Endothelial cell of umbilical vein (primary cell): ENCODE measurements at regions of chr12 and their contacts with region 1.

Region 1: GRCh38 chr12:110431957-110432587 is 18.1 kb downstream of the ARPC3 start:
- DNase-seq: no peak
- H3K4me3 ChIP-seq: no peak overlapping the region
- H3K27ac ChIP-seq: no peak overlapping the region
- H3K4me1 ChIP-seq: peaks cover 12% of the 10 kb centered on the region
- H3K27me3 ChIP-seq: no peaks in the 10 kb centered on the region
- CTCF ChIP-seq: no peak
- POLR2A ChIP-seq: no peak

Region 2: DNA sequence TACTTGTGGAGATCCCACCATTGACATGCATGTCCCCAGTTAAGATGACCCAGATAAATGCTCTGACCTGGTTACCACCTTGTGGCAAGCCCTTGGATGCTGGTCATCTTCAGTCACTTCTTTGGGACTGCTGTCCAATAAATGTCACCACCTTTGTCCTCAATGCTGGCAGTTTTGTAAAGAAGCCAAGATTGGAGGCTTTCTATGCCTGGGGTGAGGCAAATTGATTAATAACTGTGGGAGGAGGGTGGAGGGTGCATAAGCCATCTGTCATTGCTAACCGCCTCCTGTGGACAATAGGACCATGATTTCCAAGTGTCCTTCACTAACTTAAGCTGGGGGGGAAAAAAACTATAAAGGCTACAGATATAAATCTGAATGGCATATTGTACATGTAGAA is 408.5 kb before region 1 on chr12:
- CTCF ChIA-PET with region 1: interaction called, 11 read pairs
- POLR2A ChIA-PET with region 1: interaction called, 6 read pairs
- dilution Hi-C with region 1: no loop called
- intact Hi-C with region 1: no loop called
- DNase-seq: no peak
- H3K4me3 ChIP-seq: no peak overlapping the region
- H3K27ac ChIP-seq: peak overlapping the region; percentile 32
- H3K4me1 ChIP-seq: peaks cover 28% of the 10 kb centered on the region
- H3K27me3 ChIP-seq: no peaks in the 10 kb centered on the region
- CTCF ChIP-seq: no peak
- POLR2A ChIP-seq: no peak

Region 3: DNA sequence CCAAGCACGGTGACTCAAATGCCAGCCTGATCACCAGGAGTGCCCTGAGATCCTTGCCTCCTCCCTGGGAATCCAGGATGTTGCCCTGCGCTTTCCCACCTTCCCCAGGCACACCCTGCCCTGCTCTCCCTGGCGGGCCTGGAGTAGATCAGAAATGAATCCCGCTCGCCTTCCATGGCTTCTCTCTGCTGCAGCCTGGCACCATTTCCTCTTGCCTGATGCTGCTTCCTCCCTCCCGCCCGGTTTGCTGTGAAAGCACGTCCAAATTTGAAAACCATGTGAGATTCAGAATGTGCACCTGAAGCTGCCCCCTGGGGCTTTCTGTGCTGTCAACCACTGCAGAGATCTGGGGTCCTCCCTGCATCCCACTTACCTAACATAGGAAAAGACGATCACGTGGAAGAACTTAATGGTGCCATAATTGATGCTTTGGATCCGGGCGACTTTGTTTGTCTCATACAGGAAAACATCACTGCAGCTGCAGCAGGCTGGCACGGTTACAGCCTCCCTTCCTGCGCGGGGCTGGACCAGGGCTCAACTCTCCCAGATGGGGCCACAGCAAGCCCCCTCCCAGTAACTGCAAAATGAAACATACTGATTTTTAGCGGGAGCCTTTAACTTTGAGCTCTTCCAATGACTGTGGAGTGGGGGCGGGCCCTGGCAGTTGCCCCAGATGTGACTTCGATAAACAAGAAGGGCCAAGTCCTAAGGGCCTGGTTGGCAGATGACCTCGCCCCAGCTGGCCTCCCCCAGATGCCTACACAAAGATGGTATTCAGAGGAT is 358.8 kb before region 1 on chr12:
- CTCF ChIA-PET with region 1: no interaction called
- POLR2A ChIA-PET with region 1: no interaction called
- dilution Hi-C with region 1: no loop called
- intact Hi-C with region 1: no loop called
- DNase-seq: peak; percentile 30
- H3K4me3 ChIP-seq: peak overlapping the region; percentile 28 to 51 (median 36)
- H3K27ac ChIP-seq: no peak overlapping the region
- H3K4me1 ChIP-seq: peaks cover 4% of the 10 kb centered on the region
- H3K27me3 ChIP-seq: no peaks in the 10 kb centered on the region
- CTCF ChIP-seq: no peak
- POLR2A ChIP-seq: no peak

Region 4: DNA sequence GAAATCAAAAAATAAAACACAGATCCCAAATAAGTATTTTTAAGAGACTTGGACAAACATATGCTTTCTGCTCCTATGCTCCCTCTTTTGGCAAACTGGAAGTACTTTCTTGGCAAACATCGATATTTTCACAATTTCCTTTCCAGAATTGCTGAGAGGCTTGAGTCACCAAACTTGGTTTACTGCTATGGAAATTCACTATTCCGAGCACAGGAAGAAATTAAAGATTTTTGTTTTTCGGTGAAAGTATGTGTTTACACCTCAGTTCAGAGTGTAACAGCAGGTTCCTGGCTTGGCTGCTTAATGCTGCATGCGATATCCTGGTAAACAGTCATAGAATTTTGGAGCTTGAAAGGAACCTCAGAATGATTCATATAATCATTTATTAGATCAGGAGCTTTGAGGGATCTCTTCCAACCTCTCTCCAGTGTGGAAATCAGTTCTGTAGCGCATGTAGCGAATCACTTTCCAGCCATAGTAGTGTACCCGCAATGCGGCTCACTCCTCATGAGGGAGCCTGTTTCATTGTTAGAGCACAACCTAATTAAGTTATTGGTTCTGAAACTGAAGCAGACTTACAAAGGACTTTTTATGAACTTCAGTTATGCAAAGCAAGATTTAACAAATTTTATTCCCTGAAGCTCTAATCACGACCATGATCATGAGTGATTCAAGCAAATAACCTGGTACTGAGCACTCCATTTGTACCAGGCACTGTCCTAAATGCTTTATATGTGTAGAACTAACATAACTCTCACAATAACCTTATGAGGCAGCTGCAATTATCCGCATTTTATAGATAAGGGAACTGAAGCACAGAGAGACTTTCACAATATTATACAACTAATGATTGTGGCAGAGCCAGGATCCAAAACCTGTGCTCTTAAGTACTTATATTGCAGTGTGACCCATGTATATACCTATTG is 207.4 kb before region 1 on chr12:
- CTCF ChIA-PET with region 1: interaction called, 23 read pairs
- POLR2A ChIA-PET with region 1: no interaction called
- dilution Hi-C with region 1: no loop called
- intact Hi-C with region 1: loop called (anchors 1 kb)
- DNase-seq: peak; percentile 85
- H3K4me3 ChIP-seq: peak overlapping the region in 1 of 3 experiments; percentile 46
- H3K27ac ChIP-seq: no peak overlapping the region
- H3K4me1 ChIP-seq: peaks cover 6% of the 10 kb centered on the region
- H3K27me3 ChIP-seq: no peaks in the 10 kb centered on the region
- CTCF ChIP-seq: peak; percentile 43 to 53
- POLR2A ChIP-seq: no peak

Region 5: DNA sequence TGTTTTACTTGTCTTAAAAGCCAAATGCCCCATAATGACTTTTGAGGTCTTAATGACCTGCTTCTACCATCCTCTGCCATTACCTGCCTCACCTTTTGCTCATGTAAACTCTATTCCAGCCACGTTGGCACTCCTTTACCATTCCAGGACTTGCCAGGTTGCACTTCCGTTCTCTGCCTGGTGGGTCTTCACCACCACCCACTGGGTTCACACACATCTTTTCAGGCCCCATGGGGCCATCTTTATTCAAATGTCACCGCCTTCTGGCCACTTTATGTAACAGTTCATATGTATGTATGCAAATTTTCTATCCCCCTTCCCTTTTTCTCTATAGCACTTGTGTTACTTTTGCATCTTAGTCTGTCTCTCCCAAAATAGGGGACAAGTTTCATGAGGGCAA is 93.3 kb before region 1 on chr12:
- CTCF ChIA-PET with region 1: interaction called, 12 read pairs
- POLR2A ChIA-PET with region 1: no interaction called
- dilution Hi-C with region 1: no loop called
- intact Hi-C with region 1: no loop called
- DNase-seq: peak; percentile 17
- H3K4me3 ChIP-seq: no peak overlapping the region
- H3K27ac ChIP-seq: no peak overlapping the region
- H3K4me1 ChIP-seq: no peaks in the 10 kb centered on the region
- H3K27me3 ChIP-seq: no peaks in the 10 kb centered on the region
- CTCF ChIP-seq: peak in 1 of 2 donors; percentile 11
- POLR2A ChIP-seq: no peak

Region 6: DNA sequence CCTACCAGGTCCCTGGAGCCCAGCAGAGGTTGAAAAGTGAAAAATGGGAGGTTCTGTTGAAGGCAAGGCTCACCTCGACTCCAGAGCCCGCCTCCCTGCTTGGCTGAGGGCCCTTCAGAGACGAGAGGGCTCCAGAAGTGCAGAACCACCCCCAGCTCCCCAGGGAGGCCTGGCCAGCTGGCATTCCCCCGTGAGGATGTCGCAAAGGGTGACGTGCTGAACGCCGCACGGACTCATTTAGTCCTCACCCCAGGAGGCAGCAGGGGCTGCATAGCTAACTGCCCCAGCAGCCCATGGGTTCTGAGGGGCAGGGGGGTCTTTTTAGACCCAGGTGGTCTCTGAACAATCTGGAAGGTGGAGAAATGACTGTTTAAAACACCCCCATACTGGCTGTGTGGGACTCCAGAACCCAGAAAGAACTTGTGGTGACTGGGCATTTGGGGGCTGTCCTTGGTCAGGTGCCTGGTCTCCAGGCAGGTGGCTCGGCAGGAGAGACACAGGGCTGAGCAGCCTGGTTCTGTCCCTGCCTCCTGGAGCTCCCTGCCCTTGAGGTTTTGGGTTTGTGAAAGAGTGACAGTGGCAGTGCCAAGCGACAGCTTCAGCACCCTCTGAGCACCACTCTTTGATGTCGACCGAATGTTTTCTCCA is 60.5 kb before region 1 on chr12:
- CTCF ChIA-PET with region 1: interaction called, 12 read pairs
- POLR2A ChIA-PET with region 1: interaction called, 8 read pairs
- dilution Hi-C with region 1: no loop called
- intact Hi-C with region 1: no loop called
- DNase-seq: no peak
- H3K4me3 ChIP-seq: no peak overlapping the region
- H3K27ac ChIP-seq: no peak overlapping the region
- H3K4me1 ChIP-seq: no peaks in the 10 kb centered on the region
- H3K27me3 ChIP-seq: no peaks in the 10 kb centered on the region
- CTCF ChIP-seq: no peak
- POLR2A ChIP-seq: no peak

Region 7: GRCh38 chr12:110403146-110403975 is 28.7 kb before region 1 on chr12 and contains the start of gene ANAPC7:
- CTCF ChIA-PET with region 1: interaction called, 11 read pairs
- POLR2A ChIA-PET with region 1: no interaction called
- dilution Hi-C with region 1: no loop called
- intact Hi-C with region 1: loop called (anchors 1 kb)
- DNase-seq: peak; percentile 92
- H3K4me3 ChIP-seq: peak within 1 kb of the TSS; percentile 49 to 84 (median 61)
- H3K27ac ChIP-seq: peak within 1 kb of the TSS; percentile 97
- H3K4me1 ChIP-seq: peaks cover 8% of the 10 kb centered on the region
- H3K27me3 ChIP-seq: no peaks in the 10 kb centered on the region
- CTCF ChIP-seq: no peak
- POLR2A ChIP-seq: peak; percentile 83
- total RNA-seq, gene ANAPC7: 76.6 and 89.0 TPM in 2 replicates

Region 8: GRCh38 chr12:110449799-110450497 is 17.9 kb after region 1 on chr12 and contains the start of gene ARPC3:
- CTCF ChIA-PET with region 1: interaction called, 19 read pairs
- POLR2A ChIA-PET with region 1: interaction called, 3 read pairs
- dilution Hi-C with region 1: no loop called
- intact Hi-C with region 1: no loop called
- DNase-seq: peak; percentile 92
- H3K4me3 ChIP-seq: peak within 1 kb of the TSS; percentile 59 to 85 (median 83)
- H3K27ac ChIP-seq: peak within 1 kb of the TSS; percentile 89
- H3K4me1 ChIP-seq: peaks cover 5% of the 10 kb centered on the region
- H3K27me3 ChIP-seq: no peaks in the 10 kb centered on the region
- CTCF ChIP-seq: peak; percentile 87 to 89
- POLR2A ChIP-seq: peak; percentile 86
- total RNA-seq, gene ARPC3: 304 and 308 TPM in 2 replicates

Region 9: DNA sequence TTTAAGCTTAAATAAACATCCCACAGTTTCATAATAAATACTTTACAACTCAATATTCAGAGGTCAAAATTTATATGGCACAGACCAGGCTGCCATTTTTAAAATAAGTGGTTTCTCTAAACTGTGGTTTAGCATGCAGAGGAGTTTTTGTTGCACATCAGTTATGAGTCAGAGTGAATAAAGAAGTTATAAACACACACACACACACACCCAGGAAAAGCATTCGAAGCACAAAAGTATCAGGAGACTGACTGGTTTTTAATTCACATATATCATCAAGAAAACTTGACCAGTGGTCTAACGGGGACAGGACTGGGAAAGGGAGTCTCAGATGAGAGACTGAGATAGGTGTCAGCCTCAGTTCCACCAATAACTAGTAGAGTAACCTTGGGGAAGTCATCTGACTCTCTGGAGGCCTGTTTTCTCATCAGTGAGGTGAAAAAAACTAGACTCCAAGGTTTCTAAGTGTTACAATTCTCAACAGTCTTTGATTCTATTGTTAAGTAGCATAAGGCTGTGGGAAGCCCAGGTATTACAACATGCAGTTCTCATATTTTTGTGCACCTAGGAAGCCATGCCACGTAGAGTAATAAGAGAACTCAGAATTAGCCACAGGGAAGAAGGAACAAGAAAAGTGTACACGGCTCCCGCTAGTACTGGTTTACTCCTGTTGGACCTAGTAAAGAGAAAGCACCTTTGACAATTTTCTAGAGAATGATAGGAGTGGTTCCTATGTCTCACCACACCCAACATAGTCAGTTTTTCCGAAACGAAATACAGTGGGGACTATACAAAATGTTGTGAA is 145.8 kb after region 1 on chr12:
- CTCF ChIA-PET with region 1: no interaction called
- POLR2A ChIA-PET with region 1: no interaction called
- dilution Hi-C with region 1: no loop called
- intact Hi-C with region 1: no loop called
- DNase-seq: peak; percentile 48
- H3K4me3 ChIP-seq: no peak overlapping the region
- H3K27ac ChIP-seq: peak overlapping the region; percentile 42
- H3K4me1 ChIP-seq: peaks cover 20% of the 10 kb centered on the region
- H3K27me3 ChIP-seq: no peaks in the 10 kb centered on the region
- CTCF ChIP-seq: no peak
- POLR2A ChIP-seq: no peak